HCT116 (cell line): ENCODE measurements at regions of chr4 and their contacts with region 1.

Region 1: DNA sequence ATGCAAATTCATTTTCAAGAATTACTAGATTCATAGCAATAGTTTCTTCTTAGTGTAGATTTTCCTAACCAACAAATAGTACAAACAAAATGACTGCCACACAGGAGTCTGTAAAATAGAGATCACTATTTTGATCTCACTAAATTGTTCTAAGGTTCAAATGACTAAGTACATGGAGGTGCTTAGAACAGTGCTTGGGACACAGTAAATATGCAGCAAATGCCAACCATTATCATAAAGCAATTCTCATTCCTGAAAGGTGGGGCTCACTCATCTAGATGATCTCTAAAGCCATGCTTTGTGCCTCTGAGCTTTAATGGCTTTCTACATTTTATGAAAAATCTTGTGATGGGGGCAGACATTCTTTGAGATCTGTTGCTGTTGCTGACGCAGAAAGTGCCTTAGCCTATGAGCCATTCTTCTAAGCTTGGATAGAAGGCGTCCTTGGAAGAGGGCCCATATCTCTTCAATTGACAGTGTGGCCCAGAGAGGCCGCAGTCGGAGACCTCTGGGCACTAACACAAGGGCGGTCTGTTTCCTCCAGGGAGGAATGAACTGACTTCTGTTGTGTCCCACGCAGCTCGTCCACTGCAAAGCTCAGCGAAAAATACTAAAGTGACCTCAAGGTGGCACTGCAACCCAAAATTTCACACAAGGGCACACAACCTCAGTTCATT is 23.5 kb downstream of the TLR10 start:
- DNase-seq: no peak
- ATAC-seq: peak; percentile 84
- H3K4me3 ChIP-seq: no peak overlapping the region
- H3K27ac ChIP-seq: no peak overlapping the region
- H3K4me1 ChIP-seq: peaks cover 0 to 8% of the 10 kb centered on the region in 2 experiments; a peak in 1 of 4 replicates
- H3K27me3 ChIP-seq: no peaks in the 10 kb centered on the region
- CTCF ChIP-seq: peak; percentile 54 to 84 (median 72)
- POLR2A ChIP-seq: no peak
- RAD21 ChIP-seq: peak; percentile 83

Region 2: DNA sequence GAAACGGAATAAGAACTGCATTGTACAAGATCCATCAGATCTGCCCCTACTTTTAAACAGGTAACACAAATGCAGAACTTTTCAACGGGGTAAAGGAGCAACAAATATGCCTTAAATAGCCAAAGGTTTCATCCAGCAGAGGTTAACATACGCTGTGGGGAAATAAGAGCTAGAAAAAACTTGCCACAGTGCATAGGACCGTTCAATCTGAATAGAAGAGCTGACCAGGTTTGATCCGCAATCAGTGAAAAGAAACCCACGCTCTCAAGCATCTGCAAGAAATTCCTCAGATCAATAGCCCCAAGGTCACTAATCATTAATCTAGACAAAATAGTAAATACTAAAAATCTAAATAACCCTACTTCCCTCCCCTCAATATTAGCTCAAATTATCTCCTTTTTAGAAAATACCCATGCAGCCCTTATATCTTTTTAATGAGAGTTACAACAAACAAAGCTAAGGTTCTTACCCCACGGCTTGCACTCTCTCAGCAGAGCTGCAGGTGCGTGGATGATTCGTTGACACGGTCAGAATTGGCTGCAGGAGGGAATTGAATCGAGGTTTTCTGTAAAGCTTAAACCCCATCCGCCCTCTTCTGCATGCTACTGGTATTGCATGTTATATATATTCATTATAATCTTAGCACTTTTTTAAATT is 23.3 kb after region 1 on chr4 and contains the start of gene TLR10:
- CTCF ChIA-PET with region 1: interaction called, 35 read pairs
- POLR2A ChIA-PET with region 1: no interaction called
- RAD21 ChIA-PET with region 1: interaction called, 3 to 4 read pairs
- intact Hi-C with region 1: no loop called
- DNase-seq: peak; percentile 34
- ATAC-seq: peak; percentile 72
- H3K4me3 ChIP-seq: no peak within 1 kb of the TSS
- H3K27ac ChIP-seq: no peak within 1 kb of the TSS
- H3K4me1 ChIP-seq: no peaks in the 10 kb centered on the region
- H3K27me3 ChIP-seq: no peaks in the 10 kb centered on the region
- CTCF ChIP-seq: peak; percentile 30 to 56 (median 47); a peak in 5 of 6 replicates
- POLR2A ChIP-seq: no peak
- RAD21 ChIP-seq: peak; percentile 60
- total RNA-seq, gene TLR10: 0.30 TPM

Region 3: DNA sequence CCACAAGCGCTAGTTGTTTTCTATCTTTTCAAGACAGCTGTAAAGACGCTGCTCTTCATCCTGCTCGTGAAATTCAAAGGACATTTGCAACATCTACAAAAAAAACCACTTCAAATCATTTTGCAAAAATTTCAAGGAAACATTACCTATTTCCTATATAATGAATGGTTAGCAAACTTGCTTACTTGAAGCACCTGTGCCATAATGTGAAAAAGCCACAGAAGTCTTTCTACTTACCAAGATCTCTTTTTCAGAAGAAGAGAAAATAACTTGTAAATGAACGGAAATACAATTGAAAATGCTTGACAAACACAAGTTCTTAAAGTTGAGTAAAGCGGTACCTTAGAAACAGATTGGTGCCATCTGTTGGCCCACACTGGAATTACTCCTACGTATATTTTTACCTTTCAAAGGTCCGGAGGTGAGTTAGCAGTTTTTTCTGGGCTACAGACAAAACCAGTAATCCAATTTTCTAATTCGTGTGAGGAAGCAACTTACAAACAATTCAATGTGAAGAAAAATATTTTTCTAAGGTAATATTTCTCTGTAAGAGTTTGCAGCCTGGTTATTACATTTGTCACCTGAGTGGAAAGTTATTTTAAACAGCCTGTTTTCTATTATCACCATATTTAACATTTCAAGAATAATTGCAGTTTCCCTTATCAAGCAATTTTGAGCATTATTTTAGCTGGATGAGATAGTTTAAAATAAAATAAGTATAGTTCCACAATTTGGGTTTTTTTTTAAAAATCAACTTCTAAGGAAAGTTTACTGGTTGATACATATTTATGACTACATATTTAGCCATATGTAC is 97.5 kb after region 1 on chr4 and contains the start of gene TLR6:
- CTCF ChIA-PET with region 1: interaction called, 32 read pairs
- POLR2A ChIA-PET with region 1: interaction called, 4 read pairs
- RAD21 ChIA-PET with region 1: interaction called, 3 to 4 read pairs
- intact Hi-C with region 1: loop called (anchors 2 kb)
- DNase-seq: peak; percentile 80
- ATAC-seq: peak; percentile 4; the same call in 1 of the 2 replicates
- H3K4me3 ChIP-seq: peak within 1 kb of the TSS; percentile 41 to 57
- H3K27ac ChIP-seq: peak within 1 kb of the TSS; percentile 84
- H3K4me1 ChIP-seq: peaks cover 19 to 49% of the 10 kb centered on the region in 2 experiments
- H3K27me3 ChIP-seq: no peaks in the 10 kb centered on the region
- CTCF ChIP-seq: peak; percentile 58 to 78 (median 64); a peak in 5 of 6 replicates
- POLR2A ChIP-seq: no peak
- RAD21 ChIP-seq: peak; percentile 53
- total RNA-seq, gene TLR6: 4.8 TPM

Region 4: GRCh38 chr4:38889143-38889542 is 129.9 kb after region 1 on chr4:
- CTCF ChIA-PET with region 1: interaction called, 10 read pairs
- POLR2A ChIA-PET with region 1: no interaction called
- RAD21 ChIA-PET with region 1: no interaction called
- intact Hi-C with region 1: loop called (anchors 5 kb)
- DNase-seq: peak; percentile 83
- ATAC-seq: peak; percentile 51
- H3K4me3 ChIP-seq: peak overlapping the region in 1 of 2 experiments; percentile 21; a peak in 2 of 4 replicates
- H3K27ac ChIP-seq: peak overlapping the region; percentile 66
- H3K4me1 ChIP-seq: peaks cover 22 to 29% of the 10 kb centered on the region in 2 experiments
- H3K27me3 ChIP-seq: no peaks in the 10 kb centered on the region
- CTCF ChIP-seq: no peak
- POLR2A ChIP-seq: no peak
- RAD21 ChIP-seq: no peak

Region 5: DNA sequence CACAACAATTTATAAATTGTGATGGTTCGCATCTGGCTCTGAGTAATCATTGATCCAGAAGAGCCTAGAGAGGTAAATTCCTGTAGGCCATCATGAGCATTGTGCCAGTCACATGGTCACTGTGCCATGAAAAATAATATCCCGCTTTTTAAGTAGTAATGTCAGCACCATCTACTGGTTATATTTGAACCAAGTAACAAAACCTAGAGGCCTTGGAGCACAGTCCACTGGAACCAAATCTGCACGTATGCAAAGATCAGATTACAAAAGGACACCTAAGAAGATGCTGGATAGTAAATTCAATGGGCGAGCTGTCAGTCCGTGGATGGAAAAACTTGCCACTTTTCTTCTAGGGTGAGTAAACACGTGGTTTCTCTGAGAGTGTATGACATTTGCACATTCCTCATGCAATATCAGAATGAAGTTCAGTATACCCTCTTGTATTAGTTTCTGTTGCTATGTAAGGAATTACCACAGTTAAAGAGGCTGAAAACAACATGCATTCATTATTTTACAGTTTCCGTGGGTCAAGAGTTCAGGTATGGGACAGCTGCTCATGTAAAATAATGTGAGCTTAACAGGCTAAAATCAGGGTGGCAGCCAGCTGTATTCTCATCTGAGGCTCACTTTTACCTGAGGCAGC is 135.2 kb after region 1 on chr4:
- CTCF ChIA-PET with region 1: interaction called, 10 read pairs
- POLR2A ChIA-PET with region 1: no interaction called
- RAD21 ChIA-PET with region 1: no interaction called
- intact Hi-C with region 1: loop called (anchors 5 kb)
- DNase-seq: no peak
- ATAC-seq: no peak
- H3K4me3 ChIP-seq: no peak overlapping the region
- H3K27ac ChIP-seq: no peak overlapping the region
- H3K4me1 ChIP-seq: peaks cover 9 to 16% of the 10 kb centered on the region in 2 experiments
- H3K27me3 ChIP-seq: no peaks in the 10 kb centered on the region
- CTCF ChIP-seq: 0 out of 6 replicates have a peak, but pooled peaks of 1 of the 3 experiments have one; percentile 19
- POLR2A ChIP-seq: no peak
- RAD21 ChIP-seq: peak; percentile 41; the same call in 1 of the 2 replicates

Region 6: GRCh38 chr4:39134683-39135319 is 375.6 kb after region 1 on chr4:
- CTCF ChIA-PET with region 1: interaction called, 14 read pairs
- POLR2A ChIA-PET with region 1: no interaction called
- RAD21 ChIA-PET with region 1: interaction called in 1 of 2 experiments, 3 read pairs
- intact Hi-C with region 1: loop called (anchors 1 kb)
- DNase-seq: no peak
- ATAC-seq: no peak; the same call in 1 of the 2 replicates
- H3K4me3 ChIP-seq: no peak overlapping the region
- H3K27ac ChIP-seq: no peak overlapping the region
- H3K4me1 ChIP-seq: peaks cover 0 to 7% of the 10 kb centered on the region in 2 experiments; a peak in 1 of 4 replicates
- H3K27me3 ChIP-seq: no peaks in the 10 kb centered on the region
- CTCF ChIP-seq: no peak
- POLR2A ChIP-seq: no peak
- RAD21 ChIP-seq: no peak

Region 7: GRCh38 chr4:39458505-39459300 is 699.5 kb after region 1 on chr4 and contains the starts of genes LIAS and RPL9:
- CTCF ChIA-PET with region 1: interaction called, 3 read pairs
- POLR2A ChIA-PET with region 1: no interaction called
- RAD21 ChIA-PET with region 1: no interaction called
- intact Hi-C with region 1: loop called (anchors 2 kb)
- DNase-seq: peak; percentile 99
- ATAC-seq: peak; percentile 90
- H3K4me3 ChIP-seq: peak within 1 kb of the TSS; percentile 88 to 97
- H3K27ac ChIP-seq: peak within 1 kb of the TSS; percentile 97
- H3K4me1 ChIP-seq: peaks cover 5 to 21% of the 10 kb centered on the region in 2 experiments; a peak in 3 of 4 replicates
- H3K27me3 ChIP-seq: no peaks in the 10 kb centered on the region
- CTCF ChIP-seq: no peak
- POLR2A ChIP-seq: peak; percentile 97
- RAD21 ChIP-seq: no peak
- total RNA-seq, gene LIAS: 23.5 TPM
- total RNA-seq, gene RPL9: 1,657 TPM